Mammary epithelial cell (primary cell): ENCODE measurements at regions of chr9 and their contacts with region 1.

Region 1: GRCh38 chr9:112898872-112899311 is 8.2 kb upstream of the SLC46A2 start:
- DNase-seq: no peak
- H3K4me3 ChIP-seq: no peak overlapping the region
- H3K27ac ChIP-seq: no peak overlapping the region
- H3K4me1 ChIP-seq: no peaks in the 10 kb centered on the region
- H3K27me3 ChIP-seq: no peaks in the 10 kb centered on the region
- CTCF ChIP-seq: no peak

Region 2: GRCh38 chr9:112086627-112087026 is 812.3 kb before region 1 on chr9:
- CTCF ChIA-PET with region 1: no interaction called
- dilution Hi-C with region 1: no loop called
- in situ Hi-C with region 1: no loop called
- intact Hi-C with region 1: loop called (anchors 5 kb)
- DNase-seq: no peak
- H3K4me3 ChIP-seq: no peak overlapping the region
- H3K27ac ChIP-seq: no peak overlapping the region
- H3K4me1 ChIP-seq: no peaks in the 10 kb centered on the region
- H3K27me3 ChIP-seq: no peaks in the 10 kb centered on the region
- CTCF ChIP-seq: peak; percentile 41 to 48

Region 3: GRCh38 chr9:112717661-112718341 is 181.1 kb before region 1 on chr9 and contains the start of gene INIP:
- CTCF ChIA-PET with region 1: no interaction called
- dilution Hi-C with region 1: no loop called
- in situ Hi-C with region 1: no loop called
- intact Hi-C with region 1: loop called (anchors 5 kb)
- DNase-seq: peak; percentile 97
- H3K4me3 ChIP-seq: peak within 1 kb of the TSS; percentile 63 to 91 (median 80)
- H3K27ac ChIP-seq: peak within 1 kb of the TSS; percentile 70
- H3K4me1 ChIP-seq: peaks cover 8% of the 10 kb centered on the region
- H3K27me3 ChIP-seq: no peaks in the 10 kb centered on the region
- CTCF ChIP-seq: peak in 1 of 2 donors; percentile 29
- total RNA-seq, gene INIP: 23.2 to 24.3 TPM

Region 4: DNA sequence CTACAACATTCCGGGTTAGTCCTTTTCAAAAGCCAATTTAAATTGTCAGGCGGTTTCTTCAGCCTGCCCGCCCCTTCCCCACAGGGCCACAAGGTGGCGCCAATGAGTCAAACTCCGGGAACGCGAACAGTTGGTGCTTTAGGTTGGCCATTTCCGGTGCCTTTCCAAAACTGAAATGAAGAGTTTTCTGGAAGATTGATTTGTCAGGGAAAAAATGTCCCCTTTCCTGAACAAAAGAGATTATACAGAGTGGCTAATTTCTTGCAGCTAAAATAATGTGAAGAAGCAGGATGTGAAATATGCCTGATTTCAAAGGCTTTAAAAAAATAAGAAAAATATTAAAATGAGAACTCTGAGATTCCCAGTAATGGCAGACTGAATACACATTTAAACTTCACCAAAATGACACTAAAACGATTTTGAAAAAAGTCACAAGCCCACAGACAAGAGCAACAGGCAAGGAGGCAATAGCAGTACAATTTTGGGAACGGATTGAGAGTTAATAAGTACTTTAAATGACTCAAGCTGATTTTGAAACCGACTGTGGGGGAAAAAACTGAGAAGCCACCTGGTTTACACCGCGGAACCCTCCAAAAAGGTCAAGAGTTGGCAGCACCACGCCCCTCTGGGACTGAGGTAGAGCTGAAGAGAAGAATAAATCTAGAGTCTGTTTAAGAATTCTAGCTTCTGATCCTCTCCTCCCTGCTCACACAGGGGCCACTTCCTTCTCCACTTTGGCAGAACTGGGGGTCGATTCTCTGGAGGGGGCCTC is 53.9 kb before region 1 on chr9:
- CTCF ChIA-PET with region 1: interaction called, 5 read pairs
- dilution Hi-C with region 1: loop called (anchors 10 kb)
- in situ Hi-C with region 1: loop called in 1 of 2 experiments (anchors 5 kb)
- intact Hi-C with region 1: loop called (anchors 1 kb)
- DNase-seq: peak; percentile 54
- H3K4me3 ChIP-seq: no peak overlapping the region
- H3K27ac ChIP-seq: no peak overlapping the region
- H3K4me1 ChIP-seq: peaks cover 4% of the 10 kb centered on the region
- H3K27me3 ChIP-seq: no peaks in the 10 kb centered on the region
- CTCF ChIP-seq: peak; percentile 96 to 99

Region 5: GRCh38 chr9:112852741-112853504 is 46.0 kb before region 1 on chr9:
- CTCF ChIA-PET with region 1: no interaction called
- dilution Hi-C with region 1: loop called (anchors 10 kb)
- in situ Hi-C with region 1: loop called in 1 of 2 experiments (anchors 5 kb)
- intact Hi-C with region 1: no loop called
- DNase-seq: peak; percentile 50
- H3K4me3 ChIP-seq: no peak overlapping the region
- H3K27ac ChIP-seq: no peak overlapping the region
- H3K4me1 ChIP-seq: peaks cover 3% of the 10 kb centered on the region
- H3K27me3 ChIP-seq: no peaks in the 10 kb centered on the region
- CTCF ChIP-seq: no peak

Region 6: DNA sequence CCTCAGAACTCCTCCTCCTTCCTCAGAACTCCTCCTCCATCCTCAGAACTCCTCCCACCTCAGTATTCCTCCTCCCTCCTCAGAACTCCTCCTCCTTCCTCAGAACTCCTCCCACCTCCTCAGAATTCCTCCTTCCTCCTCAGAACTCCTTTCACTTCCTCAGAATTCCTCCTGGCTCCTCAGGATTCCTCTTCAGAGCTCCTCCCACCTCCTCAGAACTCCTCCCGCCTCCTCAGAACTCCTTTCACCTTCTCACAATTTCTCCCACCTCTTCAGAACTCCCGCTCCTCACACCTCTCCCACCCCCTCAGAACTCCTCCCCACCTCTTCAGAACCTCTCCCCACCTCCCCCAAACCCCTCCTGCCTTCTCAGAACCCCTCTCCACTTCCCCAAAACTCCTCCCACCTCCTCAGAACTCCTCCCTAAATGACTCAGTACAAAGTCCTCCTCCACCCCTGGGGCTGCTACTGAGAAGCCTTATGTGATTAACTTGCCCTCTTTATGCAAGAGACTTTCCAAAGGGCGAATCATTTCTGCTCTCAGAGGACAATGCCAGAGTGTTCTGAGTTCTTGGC is 31.4 kb before region 1 on chr9:
- CTCF ChIA-PET with region 1: interaction called, 12 read pairs
- dilution Hi-C with region 1: no loop called
- in situ Hi-C with region 1: no loop called
- intact Hi-C with region 1: no loop called
- DNase-seq: peak; percentile 90
- H3K4me3 ChIP-seq: no peak overlapping the region
- H3K27ac ChIP-seq: peak overlapping the region; percentile 14
- H3K4me1 ChIP-seq: peaks cover 7% of the 10 kb centered on the region
- H3K27me3 ChIP-seq: no peaks in the 10 kb centered on the region
- CTCF ChIP-seq: no peak

Region 7: DNA sequence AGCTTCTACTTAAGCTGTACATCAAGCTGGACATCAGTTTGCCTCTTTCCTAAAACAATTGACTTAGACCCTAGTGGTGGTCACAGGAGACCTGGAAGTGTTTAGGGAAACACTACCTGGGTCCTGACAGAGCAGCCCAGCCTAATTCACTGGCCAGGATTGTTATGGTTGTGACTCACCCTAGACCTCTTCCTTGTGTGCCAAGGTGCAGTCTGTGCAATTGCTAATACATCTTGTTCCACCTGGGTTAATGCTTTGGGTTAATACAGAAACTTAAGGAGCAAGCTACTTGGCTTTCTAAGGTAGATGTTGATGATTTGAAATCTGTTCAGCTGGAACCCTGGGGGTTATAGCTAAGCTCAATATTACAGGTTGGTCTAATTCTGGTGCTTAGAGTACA is 40.5 kb after region 1 on chr9:
- CTCF ChIA-PET with region 1: no interaction called
- dilution Hi-C with region 1: no loop called
- in situ Hi-C with region 1: no loop called
- intact Hi-C with region 1: no loop called
- DNase-seq: peak; percentile 41
- H3K4me3 ChIP-seq: no peak overlapping the region
- H3K27ac ChIP-seq: no peak overlapping the region
- H3K4me1 ChIP-seq: no peaks in the 10 kb centered on the region
- H3K27me3 ChIP-seq: peaks cover 3% of the 10 kb centered on the region
- CTCF ChIP-seq: no peak